Panc1 (cell line): ENCODE measurements at regions of chr9 and their contacts with region 1.

Region 1: DNA sequence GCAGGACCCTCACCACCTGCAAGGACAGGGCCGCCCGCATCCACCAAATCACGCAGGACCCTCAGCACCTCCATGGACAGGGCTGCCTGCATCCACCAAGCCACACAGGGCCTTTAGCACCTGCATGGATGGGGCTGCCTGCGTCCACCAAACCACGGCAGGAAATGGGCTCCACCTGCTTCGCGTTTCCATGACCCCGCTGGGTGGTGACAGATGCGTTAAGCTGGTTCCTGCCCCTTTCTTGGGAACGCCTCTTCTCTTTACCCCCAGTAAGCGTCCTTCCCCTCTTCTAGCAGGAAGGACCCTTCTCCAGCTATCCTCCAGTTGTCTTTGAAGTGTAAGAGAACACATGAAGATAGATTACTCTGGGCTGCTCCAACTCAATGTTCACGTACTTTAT is 13.5 kb downstream of the FBP1 start:
- DNase-seq: no peak
- ATAC-seq: no peak
- H3K4me3 ChIP-seq: no peak overlapping the region
- H3K27ac ChIP-seq: no peak overlapping the region
- H3K4me1 ChIP-seq: no peaks in the 10 kb centered on the region
- H3K27me3 ChIP-seq: no peaks in the 10 kb centered on the region
- CTCF ChIP-seq: no peak

Region 2: GRCh38 chr9:94538908-94539307 is 86.9 kb before region 1 on chr9:
- CTCF ChIA-PET with region 1: interaction called, 11 read pairs
- POLR2A ChIA-PET with region 1: no interaction called
- in situ Hi-C with region 1: no loop called
- intact Hi-C with region 1: no loop called
- DNase-seq: no peak
- ATAC-seq: no peak
- H3K4me3 ChIP-seq: no peak overlapping the region
- H3K27ac ChIP-seq: no peak overlapping the region
- H3K4me1 ChIP-seq: no peaks in the 10 kb centered on the region
- H3K27me3 ChIP-seq: no peaks in the 10 kb centered on the region
- CTCF ChIP-seq: no peak

Region 3: DNA sequence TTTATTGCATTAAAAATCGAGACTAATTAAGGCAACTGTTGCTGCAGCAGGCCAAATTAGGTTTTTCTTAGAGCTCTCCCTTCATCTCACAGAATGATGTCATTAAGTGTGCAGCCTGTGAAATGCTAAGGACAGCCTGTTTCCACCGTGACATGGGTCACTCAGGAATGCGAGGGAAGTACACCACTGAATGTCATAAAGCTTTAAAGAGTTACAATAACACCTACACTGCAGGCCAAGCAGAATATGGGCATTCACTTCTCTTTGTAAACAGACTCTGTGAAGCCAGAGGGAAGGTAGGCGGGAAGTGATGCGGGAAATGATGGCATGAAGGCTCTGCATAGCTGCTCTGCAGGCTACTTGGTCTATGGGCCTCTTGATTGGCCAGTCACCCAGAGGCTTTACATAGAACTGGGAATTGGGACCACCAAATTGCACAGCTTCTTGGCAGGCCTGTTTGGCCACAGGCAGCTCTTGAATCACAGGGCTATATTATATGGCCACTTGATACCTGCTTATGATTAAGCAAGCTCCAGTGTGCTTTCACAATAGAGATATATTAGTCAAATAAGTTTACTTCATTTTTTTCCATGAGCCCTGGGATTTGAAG is 72.2 kb after region 1 on chr9:
- CTCF ChIA-PET with region 1: no interaction called
- POLR2A ChIA-PET with region 1: no interaction called
- in situ Hi-C with region 1: no loop called
- intact Hi-C with region 1: no loop called
- DNase-seq: no peak
- ATAC-seq: no peak; the same call in 1 of the 2 replicates
- H3K4me3 ChIP-seq: no peak overlapping the region
- H3K27ac ChIP-seq: no peak overlapping the region
- H3K4me1 ChIP-seq: no peaks in the 10 kb centered on the region; the same call in 1 of the 2 replicates
- H3K27me3 ChIP-seq: no peaks in the 10 kb centered on the region
- CTCF ChIP-seq: no peak